Heart right ventricle (tissue), 16 donors: ENCODE measurements at regions of chr11 and their contacts with region 1.

Region 1: DNA sequence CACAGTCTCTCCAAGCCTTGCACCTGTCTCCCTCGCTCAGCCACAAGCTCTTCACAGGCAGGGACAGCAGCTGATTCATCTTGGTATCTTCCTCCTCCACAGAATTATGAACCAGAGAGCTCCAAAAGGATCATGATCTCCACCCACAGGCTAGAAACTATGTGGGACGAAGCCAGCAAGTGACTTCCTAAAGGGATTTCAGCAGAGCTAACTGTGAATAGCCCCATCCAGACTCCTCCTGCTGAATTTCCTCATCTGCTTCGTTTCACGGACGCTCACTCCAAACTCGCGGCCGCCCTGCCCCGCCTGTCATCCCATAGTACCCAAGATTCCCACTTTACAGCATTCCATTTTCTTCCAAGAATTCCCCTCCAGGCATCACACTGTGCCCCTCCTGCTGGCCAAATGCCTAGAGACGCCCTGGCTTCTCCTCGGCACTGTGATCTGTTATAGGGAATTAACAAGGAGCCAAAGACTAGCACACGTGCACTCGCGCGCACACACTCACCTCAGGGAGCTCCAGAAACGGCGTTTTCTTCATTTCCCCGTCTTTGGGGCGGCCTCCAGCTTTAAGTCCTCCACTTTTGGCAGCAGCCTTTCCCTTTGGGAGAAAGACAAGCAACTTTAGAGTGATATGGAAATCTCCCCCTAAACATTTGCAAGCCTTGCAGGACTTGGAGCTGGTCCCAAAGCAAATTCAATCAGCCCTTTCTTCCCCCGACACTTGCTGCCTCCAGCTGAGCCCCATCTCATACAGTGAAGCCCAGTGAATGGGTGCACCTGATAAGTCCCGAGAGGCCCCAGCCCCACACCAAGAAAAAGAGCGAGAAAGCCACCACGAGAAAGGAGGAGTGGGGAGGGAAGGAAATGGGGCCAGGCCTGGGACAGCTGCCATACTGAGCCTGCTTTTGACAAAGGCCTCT is 35.5 kb downstream of the SPATA19 start:
- DNase-seq: peak in 1 of 2 donors; percentile 23
- ATAC-seq: peak in 7 of 8 donors; percentile 16 to 79 (median 72)
- H3K4me3 ChIP-seq: no peak overlapping the region
- H3K27ac ChIP-seq: no peak overlapping the region
- H3K4me1 ChIP-seq: peaks cover 0 to 14% (median 0%) of the 10 kb centered on the region in 9 donors
- H3K27me3 ChIP-seq: peaks cover 0 to 49% (median 34%) of the 10 kb centered on the region in 7 donors
- CTCF ChIP-seq: no peak

Region 2: GRCh38 chr11:133697161-133697560 is 112.7 kb before region 1 on chr11:
- intact Hi-C with region 1: loop called in 1 of 10 experiments (anchors 10 kb)
- DNase-seq: peak in 1 of 2 donors; percentile 54
- ATAC-seq: peak; percentile 59 to 94 (median 82)
- H3K4me3 ChIP-seq: peak overlapping the region in 1 of 10 donors; percentile 11
- H3K27ac ChIP-seq: peak overlapping the region; percentile 36 to 83 (median 72)
- H3K4me1 ChIP-seq: peaks cover 0 to 14% (median 3%) of the 10 kb centered on the region in 9 donors
- H3K27me3 ChIP-seq: no peaks in the 10 kb centered on the region
- CTCF ChIP-seq: no peak